H1 (cell line): ENCODE measurements at regions of chr18 and their contacts with region 1.

Region 1: GRCh38 chr18:76982841-76983587 is 149.6 kb downstream of the MBP start:
- DNase-seq: peak; percentile 87 to 98
- H3K4me3 ChIP-seq: no peak overlapping the region
- H3K27ac ChIP-seq: no peak overlapping the region
- H3K4me1 ChIP-seq: peaks cover 0 to 20% (median 9%) of the 10 kb centered on the region in 4 experiments
- H3K27me3 ChIP-seq: no peaks in the 10 kb centered on the region
- CTCF ChIP-seq: peak in 2 of 3 experiments; percentile 94 to 96; a peak in 3 of 4 replicates
- EP300 ChIP-seq: no peak
- POLR2A ChIP-seq: no peak
- RAD21 ChIP-seq: peak; percentile 77 to 84

Region 2: GRCh38 chr18:76803814-76804213 is 179.2 kb before region 1 on chr18:
- CTCF ChIA-PET with region 1: interaction called, 11 read pairs
- POLR2A ChIA-PET with region 1: no interaction called
- DNase-seq: peak in 1 of 2 experiments; percentile 88
- H3K4me3 ChIP-seq: no peak overlapping the region
- H3K27ac ChIP-seq: no peak overlapping the region
- H3K4me1 ChIP-seq: peaks cover 0 to 2% (median 0%) of the 10 kb centered on the region in 4 experiments; a peak in 2 of 7 replicates
- H3K27me3 ChIP-seq: no peaks in the 10 kb centered on the region
- CTCF ChIP-seq: peak; percentile 78 to 92 (median 85)
- EP300 ChIP-seq: no peak
- POLR2A ChIP-seq: no peak
- RAD21 ChIP-seq: peak; percentile 66 to 72

Region 3: DNA sequence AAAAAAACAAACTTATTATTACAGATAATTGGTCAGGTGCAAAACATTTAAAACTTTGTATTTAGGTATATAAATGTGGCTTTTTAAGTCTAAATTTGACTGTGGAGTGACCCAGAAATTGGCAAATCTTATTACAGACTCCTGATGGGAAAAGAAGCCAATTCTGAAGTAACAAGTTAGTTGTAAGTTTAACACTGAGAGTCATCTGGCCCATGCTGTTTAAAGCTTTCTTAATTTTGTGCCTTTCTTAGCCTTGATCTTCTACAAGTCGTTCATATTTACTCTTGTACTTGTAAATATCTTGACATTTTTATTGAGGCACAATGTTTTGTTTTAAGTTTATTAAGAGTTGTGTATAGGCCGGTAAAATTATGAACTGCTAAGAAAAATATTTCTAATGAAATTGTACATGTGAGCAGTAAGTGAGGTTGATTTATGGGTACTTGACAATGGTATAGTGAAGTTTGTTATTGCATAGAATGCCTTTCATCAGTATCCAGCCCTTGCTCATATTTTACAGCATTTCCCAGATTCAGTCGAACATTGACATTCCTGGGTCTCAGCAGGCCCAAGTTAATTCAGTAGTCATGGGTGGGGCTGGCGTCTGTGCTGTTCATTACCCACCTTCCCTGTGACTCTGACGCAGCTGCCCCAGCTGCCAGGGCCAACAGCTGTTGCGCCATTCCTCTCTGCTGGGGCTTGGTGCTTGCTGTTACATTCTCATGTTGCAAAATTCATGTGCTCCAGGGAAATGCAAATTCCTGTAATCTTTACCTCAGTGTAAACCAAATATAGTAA is 39.3 kb before region 1 on chr18:
- CTCF ChIA-PET with region 1: interaction called, 10 read pairs
- POLR2A ChIA-PET with region 1: no interaction called
- DNase-seq: no peak
- H3K4me3 ChIP-seq: no peak overlapping the region
- H3K27ac ChIP-seq: no peak overlapping the region
- H3K4me1 ChIP-seq: no peaks in the 10 kb centered on the region
- H3K27me3 ChIP-seq: no peaks in the 10 kb centered on the region
- CTCF ChIP-seq: no peak
- EP300 ChIP-seq: no peak
- POLR2A ChIP-seq: no peak
- RAD21 ChIP-seq: no peak

Region 4: GRCh38 chr18:76970770-76971559 is 12.0 kb before region 1 on chr18:
- CTCF ChIA-PET with region 1: interaction called, 188 read pairs
- POLR2A ChIA-PET with region 1: interaction called, 14 read pairs
- DNase-seq: no peak
- H3K4me3 ChIP-seq: no peak overlapping the region
- H3K27ac ChIP-seq: no peak overlapping the region
- H3K4me1 ChIP-seq: peaks cover 4 to 30% (median 15%) of the 10 kb centered on the region in 4 experiments
- H3K27me3 ChIP-seq: no peaks in the 10 kb centered on the region
- CTCF ChIP-seq: no peak
- EP300 ChIP-seq: no peak
- POLR2A ChIP-seq: no peak
- RAD21 ChIP-seq: no peak

Region 5: GRCh38 chr18:77054606-77055428 is 71.8 kb after region 1 on chr18:
- CTCF ChIA-PET with region 1: interaction called, 15 read pairs
- POLR2A ChIA-PET with region 1: no interaction called
- DNase-seq: peak in 1 of 2 experiments; percentile 33
- H3K4me3 ChIP-seq: no peak overlapping the region
- H3K27ac ChIP-seq: no peak overlapping the region
- H3K4me1 ChIP-seq: peaks cover 15 to 32% (median 21%) of the 10 kb centered on the region in 4 experiments
- H3K27me3 ChIP-seq: no peaks in the 10 kb centered on the region
- CTCF ChIP-seq: peak; percentile 52 to 60 (median 59)
- EP300 ChIP-seq: no peak
- POLR2A ChIP-seq: no peak
- RAD21 ChIP-seq: peak; percentile 60 to 61

Region 6: DNA sequence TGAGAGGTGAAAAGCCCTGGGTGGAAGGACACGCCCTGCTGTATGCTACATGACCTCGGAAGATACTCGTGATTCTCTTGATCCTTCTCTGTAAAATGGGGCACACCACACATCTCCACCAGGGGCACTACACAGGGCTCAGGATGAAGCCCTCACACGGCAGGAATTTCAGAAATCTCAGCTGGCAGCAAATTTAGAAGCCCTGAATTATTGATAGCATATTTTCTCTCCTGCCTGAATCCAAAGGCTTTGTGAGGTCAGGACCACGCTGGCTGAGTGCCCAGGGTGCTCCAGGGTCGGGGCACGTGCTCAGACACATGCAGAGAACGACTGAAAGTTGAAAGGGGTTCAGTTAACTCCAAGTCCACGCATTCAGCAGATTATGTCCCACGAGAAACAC is 224.5 kb after region 1 on chr18:
- CTCF ChIA-PET with region 1: interaction called, 14 read pairs
- POLR2A ChIA-PET with region 1: no interaction called
- DNase-seq: no peak
- H3K4me3 ChIP-seq: no peak overlapping the region
- H3K27ac ChIP-seq: no peak overlapping the region
- H3K4me1 ChIP-seq: no peaks in the 10 kb centered on the region; a peak in 1 of 7 replicates
- H3K27me3 ChIP-seq: no peaks in the 10 kb centered on the region; a peak in 1 of 7 replicates
- CTCF ChIP-seq: peak; percentile 57 to 75 (median 63)
- EP300 ChIP-seq: no peak
- POLR2A ChIP-seq: no peak
- RAD21 ChIP-seq: peak; percentile 33 to 54